ENCODE measurements at regions of chr17 and their contacts with region 1.

Region 1: GRCh38 chr17:78013683-78014467 is 55.4 kb downstream of the TNRC6C start:
- DNase-seq: peak; percentile 33
- ATAC-seq: peak; percentile 90
- H3K4me3 ChIP-seq: no peak overlapping the region
- H3K27ac ChIP-seq: no peak overlapping the region
- H3K4me1 ChIP-seq: no peaks in the 10 kb centered on the region
- H3K27me3 ChIP-seq: no peaks in the 10 kb centered on the region
- CTCF ChIP-seq: peak; percentile 85

Region 2: GRCh38 chr17:77542551-77543490 is 471.1 kb before region 1 on chr17:
- CTCF ChIA-PET with region 1: interaction called, 12 read pairs
- POLR2A ChIA-PET with region 1: no interaction called
- in situ Hi-C with region 1: no loop called
- intact Hi-C with region 1: loop called (anchors 1 kb)
- DNase-seq: peak; percentile 48
- ATAC-seq: peak; percentile 96
- H3K4me3 ChIP-seq: no peak overlapping the region
- H3K27ac ChIP-seq: no peak overlapping the region
- H3K4me1 ChIP-seq: 0 out of 2 replicates have a peak, but pooled peaks cover 2% of the 10 kb centered on the region
- H3K27me3 ChIP-seq: peaks cover 2% of the 10 kb centered on the region; the same call in 1 of the 2 replicates
- CTCF ChIP-seq: peak; percentile 98

Region 3: DNA sequence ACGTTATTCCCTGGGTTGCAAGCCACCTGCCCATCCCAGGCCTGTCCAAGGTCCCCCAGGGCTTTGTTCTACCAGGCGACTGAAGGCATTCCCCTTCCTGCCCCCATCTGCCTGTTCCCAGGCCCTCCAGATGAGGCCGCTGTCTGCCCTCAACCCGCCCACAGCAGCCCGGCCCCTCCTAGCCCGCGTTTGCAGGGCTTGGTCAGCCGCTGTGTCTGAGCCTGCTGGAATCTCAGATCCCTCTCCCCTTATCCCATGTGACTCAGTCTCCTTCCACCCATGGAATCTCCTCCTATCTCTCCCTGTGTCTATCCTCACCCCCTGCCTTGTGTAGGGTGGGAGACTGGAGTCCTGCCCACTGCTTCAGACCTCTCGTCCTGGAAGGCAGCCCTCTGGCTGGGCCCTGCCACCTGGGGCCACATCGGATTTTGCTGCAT is 241.4 kb before region 1 on chr17:
- CTCF ChIA-PET with region 1: interaction called, 3 read pairs
- POLR2A ChIA-PET with region 1: no interaction called
- in situ Hi-C with region 1: no loop called
- intact Hi-C with region 1: loop called (anchors 2 kb)
- DNase-seq: peak; percentile 18
- ATAC-seq: peak; percentile 96
- H3K4me3 ChIP-seq: no peak overlapping the region
- H3K27ac ChIP-seq: no peak overlapping the region
- H3K4me1 ChIP-seq: peaks cover 3% of the 10 kb centered on the region; the same call in 1 of the 2 replicates
- H3K27me3 ChIP-seq: 0 out of 2 replicates have a peak, but pooled peaks cover 3% of the 10 kb centered on the region
- CTCF ChIP-seq: peak; percentile 90

Region 4: GRCh38 chr17:77802811-77803220 is 211.1 kb before region 1 on chr17:
- CTCF ChIA-PET with region 1: interaction called, 15 read pairs
- POLR2A ChIA-PET with region 1: no interaction called
- in situ Hi-C with region 1: no loop called
- intact Hi-C with region 1: no loop called
- DNase-seq: no peak
- ATAC-seq: peak; percentile 40; the same call in 1 of the 2 replicates
- H3K4me3 ChIP-seq: no peak overlapping the region
- H3K27ac ChIP-seq: no peak overlapping the region
- H3K4me1 ChIP-seq: no peaks in the 10 kb centered on the region
- H3K27me3 ChIP-seq: peaks cover 14% of the 10 kb centered on the region
- CTCF ChIP-seq: no peak

Region 5: GRCh38 chr17:77914385-77915254 is 99.3 kb before region 1 on chr17:
- CTCF ChIA-PET with region 1: interaction called, 3 read pairs
- POLR2A ChIA-PET with region 1: no interaction called
- in situ Hi-C with region 1: no loop called
- intact Hi-C with region 1: loop called (anchors 10 kb)
- DNase-seq: no peak
- ATAC-seq: peak; percentile 86
- H3K4me3 ChIP-seq: no peak overlapping the region
- H3K27ac ChIP-seq: no peak overlapping the region
- H3K4me1 ChIP-seq: peaks cover 19% of the 10 kb centered on the region
- H3K27me3 ChIP-seq: peaks cover 35% of the 10 kb centered on the region
- CTCF ChIP-seq: no peak

Region 6: DNA sequence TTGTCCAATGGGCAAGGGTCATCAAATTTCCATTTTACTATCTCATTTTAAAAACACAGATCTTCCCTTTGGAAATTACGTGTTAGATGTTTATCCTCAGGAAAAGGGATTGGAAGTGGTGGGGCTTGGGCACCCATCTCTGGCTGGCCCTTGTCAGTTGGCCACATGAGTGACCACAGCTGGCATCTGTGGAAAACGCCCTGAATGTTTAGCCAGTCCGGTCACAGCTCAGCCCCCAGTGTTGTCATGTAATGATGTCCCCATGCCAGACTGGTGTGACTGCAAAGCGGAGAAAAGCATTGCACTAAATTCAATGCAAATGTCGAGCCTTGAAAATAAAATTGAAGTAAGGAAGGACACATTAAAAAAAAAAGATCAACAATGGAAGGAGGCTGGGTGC is 61.7 kb after region 1 on chr17:
- CTCF ChIA-PET with region 1: interaction called, 11 read pairs
- POLR2A ChIA-PET with region 1: no interaction called
- in situ Hi-C with region 1: no loop called
- intact Hi-C with region 1: no loop called
- DNase-seq: no peak
- ATAC-seq: no peak
- H3K4me3 ChIP-seq: no peak overlapping the region
- H3K27ac ChIP-seq: no peak overlapping the region
- H3K4me1 ChIP-seq: no peaks in the 10 kb centered on the region
- H3K27me3 ChIP-seq: no peaks in the 10 kb centered on the region
- CTCF ChIP-seq: no peak

Measured in Panc1 (cell line).